ENCODE measurements at regions of chr3 and their contacts with region 1.

Region 1: DNA sequence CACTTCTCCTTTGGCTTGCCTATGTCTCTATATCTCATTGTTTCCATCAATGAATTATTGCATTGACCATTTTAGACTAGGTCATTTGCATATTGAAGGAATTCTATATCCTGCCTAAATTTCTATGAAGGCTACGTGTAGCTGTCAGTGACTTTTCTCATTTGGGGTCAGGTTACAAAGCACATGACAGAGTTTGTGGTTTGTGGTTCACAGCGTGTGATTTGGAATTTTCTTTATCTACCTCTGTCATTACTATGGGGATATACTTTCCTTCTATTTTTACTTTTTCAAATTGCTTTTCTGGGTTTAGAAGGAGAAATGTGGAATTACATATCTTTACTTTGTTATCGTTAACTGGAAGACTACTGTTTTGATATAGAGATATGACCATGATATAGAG is 317.3 kb upstream of the CFAP20DC start:
- DNase-seq: no peak
- H3K4me3 ChIP-seq: no peak overlapping the region
- H3K27ac ChIP-seq: no peak overlapping the region
- H3K4me1 ChIP-seq: no peaks in the 10 kb centered on the region
- H3K27me3 ChIP-seq: no peaks in the 10 kb centered on the region
- CTCF ChIP-seq: no peak
- EP300 ChIP-seq: no peak
- POLR2A ChIP-seq: no peak

Region 2: DNA sequence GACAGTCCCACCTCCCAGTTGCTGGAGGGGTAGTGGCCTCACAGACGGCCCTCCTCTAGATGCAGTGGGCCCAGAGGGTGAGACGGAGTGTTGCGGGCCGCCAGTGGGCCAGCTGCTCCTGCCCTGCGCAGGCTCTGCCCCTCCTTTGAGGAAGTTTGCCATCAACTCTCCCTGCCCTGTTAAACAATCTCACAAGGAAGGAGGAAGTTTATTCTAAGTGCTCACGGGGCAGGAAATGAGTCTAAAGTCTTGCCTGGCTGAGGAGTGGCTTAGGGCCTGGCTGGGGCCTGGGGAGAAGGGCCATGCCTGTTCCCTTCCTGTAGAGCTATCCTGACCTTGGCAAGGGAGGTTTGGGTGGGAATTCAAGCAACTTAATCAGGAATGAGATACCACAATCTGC is 700.5 kb before region 1 on chr3 and contains the start of gene FAM3D:
- intact Hi-C with region 1: loop called in 1 of 4 experiments (anchors 5 kb)
- DNase-seq: no peak
- H3K4me3 ChIP-seq: no peak within 1 kb of the TSS
- H3K27ac ChIP-seq: no peak within 1 kb of the TSS
- H3K4me1 ChIP-seq: no peaks in the 10 kb centered on the region
- H3K27me3 ChIP-seq: no peaks in the 10 kb centered on the region
- CTCF ChIP-seq: no peak
- EP300 ChIP-seq: no peak
- POLR2A ChIP-seq: no peak
- total RNA-seq, gene FAM3D: 0.36 to 6.3 TPM in 2 of 7 donors, not detected in the others

Region 3: DNA sequence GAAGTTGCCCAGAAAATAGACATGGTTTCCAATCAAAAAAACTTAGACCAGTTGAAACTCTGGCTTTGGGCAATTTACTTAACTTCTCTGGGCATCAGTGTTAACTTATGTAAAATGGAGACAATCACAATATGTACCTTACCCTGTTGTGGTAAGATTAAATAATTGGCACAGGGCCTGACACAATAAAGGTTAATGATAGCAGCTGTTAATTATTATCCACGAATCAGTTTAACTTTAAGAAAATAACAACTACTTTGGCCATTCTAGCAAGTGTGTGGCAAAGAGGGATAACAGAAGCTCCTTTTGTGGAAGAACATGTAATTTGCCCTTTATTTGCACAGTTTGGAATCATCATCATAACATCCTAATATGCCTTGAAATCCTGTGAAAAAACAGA is 1096.5 kb after region 1 on chr3:
- intact Hi-C with region 1: no loop called
- DNase-seq: no peak
- H3K4me3 ChIP-seq: no peak overlapping the region
- H3K27ac ChIP-seq: no peak overlapping the region
- H3K4me1 ChIP-seq: no peaks in the 10 kb centered on the region
- H3K27me3 ChIP-seq: no peaks in the 10 kb centered on the region
- CTCF ChIP-seq: no peak
- EP300 ChIP-seq: no peak
- POLR2A ChIP-seq: no peak

Region 4: GRCh38 chr3:60514866-60515265 is 1147.7 kb after region 1 on chr3:
- intact Hi-C with region 1: no loop called
- DNase-seq: no peak
- H3K4me3 ChIP-seq: no peak overlapping the region
- H3K27ac ChIP-seq: no peak overlapping the region
- H3K4me1 ChIP-seq: peaks cover 2% of the 10 kb centered on the region
- H3K27me3 ChIP-seq: no peaks in the 10 kb centered on the region
- CTCF ChIP-seq: no peak
- EP300 ChIP-seq: no peak
- POLR2A ChIP-seq: no peak